Right ventricle myocardium inferior (tissue), 1 donor: ENCODE measurements at regions of chr18 and their contacts with region 1.

Region 1: GRCh38 chr18:11980555-11981382 is 538 bp upstream of the IMPA2 start:
- DNase-seq: peak; percentile 99
- ATAC-seq: peak; percentile 96

Region 2: GRCh38 chr18:11851146-11851805 is 129.5 kb before region 1 on chr18 and contains the start of gene CHMP1B:
- intact Hi-C with region 1: loop called (anchors 5 kb)
- DNase-seq: peak; percentile 100
- ATAC-seq: peak; percentile 98
- total RNA-seq, gene CHMP1B: 28.6 TPM

Region 3: DNA sequence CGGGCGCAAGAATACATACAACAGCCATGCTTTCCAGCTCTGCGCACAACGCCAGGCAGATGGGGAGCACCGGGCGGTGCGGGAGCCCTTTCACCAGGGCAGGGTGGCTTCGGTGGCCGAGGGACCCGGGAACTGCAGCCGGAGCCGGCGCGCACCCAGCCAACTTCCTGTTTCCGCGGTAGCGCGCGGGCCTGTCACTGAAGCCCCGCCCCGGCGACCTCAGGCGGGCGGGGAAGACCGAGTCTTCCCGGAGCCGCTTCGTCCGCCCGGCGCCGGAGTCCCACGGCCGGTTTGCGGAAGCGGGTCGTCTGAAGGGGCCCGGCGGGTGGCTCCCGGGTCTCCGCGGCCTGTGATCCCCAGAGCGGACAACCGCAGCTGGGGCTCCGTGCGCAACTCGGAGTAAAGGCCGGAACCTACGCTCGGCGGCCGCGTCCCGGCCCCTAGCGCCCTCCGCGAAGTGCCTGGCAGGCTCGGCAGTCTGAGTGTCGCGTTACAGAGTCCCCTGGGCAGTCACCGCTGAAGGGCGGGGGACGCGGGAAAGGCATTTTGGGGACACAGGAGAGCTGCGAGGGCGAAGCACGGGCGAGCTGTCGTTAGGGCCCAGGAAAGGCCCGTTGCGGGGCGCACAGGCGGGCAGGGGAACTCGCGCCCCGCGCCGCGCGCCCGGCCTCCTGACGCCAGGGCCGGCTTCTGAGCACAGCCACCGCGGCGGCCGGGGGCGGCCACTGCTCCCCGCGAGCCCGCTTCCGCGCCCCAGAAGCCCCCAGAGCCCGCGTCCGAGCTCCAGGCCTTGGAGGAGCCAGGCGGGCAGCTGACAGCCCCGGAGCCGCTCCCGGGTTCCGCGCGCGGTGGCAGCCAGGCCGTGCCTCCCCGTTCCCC is 72.3 kb before region 1 on chr18 and contains the start of gene MPPE1:
- intact Hi-C with region 1: loop called (anchors 2 kb)
- DNase-seq: peak; percentile 97
- ATAC-seq: peak; percentile 97
- total RNA-seq, gene MPPE1: 34.5 TPM

Region 4: DNA sequence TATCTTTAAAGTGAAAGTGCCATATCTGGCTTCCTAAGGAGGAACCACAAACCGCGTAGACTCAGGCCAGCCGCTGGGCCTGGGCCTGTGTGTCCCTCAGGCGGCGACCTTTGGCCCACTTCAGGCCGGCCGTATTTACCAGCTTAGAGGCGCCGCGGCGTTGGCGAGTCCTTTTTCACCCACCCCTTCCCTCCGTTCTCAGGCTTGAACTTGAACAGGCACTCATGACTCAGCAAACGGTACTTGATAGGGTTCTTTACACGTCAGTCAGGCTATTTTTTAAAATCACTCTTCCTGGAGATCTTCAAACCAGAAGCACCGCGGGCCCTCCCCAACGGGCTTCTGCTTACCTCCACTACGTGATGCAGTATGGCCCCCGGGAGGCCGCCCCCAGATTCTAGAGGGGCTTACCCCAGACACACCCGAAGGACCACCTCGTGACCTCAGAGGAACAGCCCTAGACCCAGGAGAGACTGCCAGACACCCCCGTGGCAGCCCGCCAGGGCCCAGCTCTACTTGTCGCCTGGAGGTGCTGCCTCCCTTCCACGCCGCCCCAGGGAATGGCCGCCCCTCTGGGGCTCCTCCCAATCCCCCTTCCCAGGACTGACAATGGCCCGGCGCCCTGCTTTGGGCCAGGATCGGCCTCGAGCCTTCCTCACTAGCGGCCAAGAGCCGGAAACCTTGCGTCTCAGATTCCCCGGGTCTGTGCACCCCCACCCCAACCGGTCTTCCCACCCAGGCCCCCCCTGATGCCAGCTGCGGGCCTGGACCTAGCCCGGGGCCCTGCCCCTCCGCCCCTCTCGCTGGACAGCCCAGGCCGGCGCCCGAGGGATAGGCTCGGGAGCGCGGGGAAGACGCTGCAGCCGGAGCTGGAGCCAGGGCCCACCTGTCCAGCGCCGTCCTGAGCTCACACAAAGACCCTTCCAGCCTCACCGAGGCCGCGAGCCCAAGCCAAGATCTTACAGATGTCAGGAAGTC is 33.3 kb before region 1 on chr18:
- intact Hi-C with region 1: loop called (anchors 1 kb)
- DNase-seq: peak; percentile 98
- ATAC-seq: peak; percentile 98